Lower leg skin (tissue), 4 donors: ENCODE measurements at regions of chr17 and their contacts with region 1.

Region 1: GRCh38 chr17:979538-980405 is at the start of gene NXN:
- DNase-seq: peak; percentile 68 to 96
- H3K4me3 ChIP-seq: peak within 1 kb of the TSS; percentile 45
- CTCF ChIP-seq: no peak
- POLR2A ChIP-seq: no peak
- total RNA-seq, gene NXN: 11.3 to 51.6 (median 31.8) TPM

Region 2: GRCh38 chr17:784143-784542 is 195.6 kb before region 1 on chr17:
- intact Hi-C with region 1: no loop called
- DNase-seq: peak in 1 of 2 donors; percentile 32
- H3K4me3 ChIP-seq: no peak overlapping the region
- CTCF ChIP-seq: no peak
- POLR2A ChIP-seq: no peak

Region 3: DNA sequence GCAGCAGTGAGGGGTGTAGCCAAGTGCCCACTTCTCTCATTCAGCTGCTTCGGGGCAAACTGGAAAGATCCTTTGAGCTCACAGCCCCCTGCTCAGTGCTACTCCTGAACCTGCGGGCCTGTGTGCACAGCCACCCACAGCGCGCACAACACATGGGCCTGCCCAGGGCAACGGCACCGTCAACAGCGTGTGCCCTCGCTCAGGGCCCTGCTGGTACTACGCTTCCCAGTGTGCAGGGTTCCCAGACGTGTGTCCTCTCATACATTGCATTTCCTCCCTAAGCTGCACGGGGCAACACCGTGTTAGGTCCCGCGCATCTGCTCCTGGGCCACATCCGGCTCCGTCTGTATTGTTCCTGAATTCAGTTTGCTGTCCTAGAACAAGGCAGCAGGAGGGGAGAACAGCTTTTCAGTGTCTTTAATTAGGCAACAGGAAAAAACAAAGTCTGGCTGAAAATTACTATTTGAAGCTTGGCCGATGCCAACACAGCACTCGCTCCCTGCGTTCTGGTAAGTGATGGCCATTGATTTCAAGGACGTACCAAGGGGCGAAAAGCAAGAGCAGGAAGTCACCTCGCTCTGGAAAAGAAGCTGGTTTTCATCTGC is 182.4 kb before region 1 on chr17:
- intact Hi-C with region 1: loop called (anchors 2 kb)
- DNase-seq: no peak
- H3K4me3 ChIP-seq: no peak overlapping the region
- CTCF ChIP-seq: no peak
- POLR2A ChIP-seq: no peak